ENCODE measurements at regions of chr17 and their contacts with region 1.

Region 1: DNA sequence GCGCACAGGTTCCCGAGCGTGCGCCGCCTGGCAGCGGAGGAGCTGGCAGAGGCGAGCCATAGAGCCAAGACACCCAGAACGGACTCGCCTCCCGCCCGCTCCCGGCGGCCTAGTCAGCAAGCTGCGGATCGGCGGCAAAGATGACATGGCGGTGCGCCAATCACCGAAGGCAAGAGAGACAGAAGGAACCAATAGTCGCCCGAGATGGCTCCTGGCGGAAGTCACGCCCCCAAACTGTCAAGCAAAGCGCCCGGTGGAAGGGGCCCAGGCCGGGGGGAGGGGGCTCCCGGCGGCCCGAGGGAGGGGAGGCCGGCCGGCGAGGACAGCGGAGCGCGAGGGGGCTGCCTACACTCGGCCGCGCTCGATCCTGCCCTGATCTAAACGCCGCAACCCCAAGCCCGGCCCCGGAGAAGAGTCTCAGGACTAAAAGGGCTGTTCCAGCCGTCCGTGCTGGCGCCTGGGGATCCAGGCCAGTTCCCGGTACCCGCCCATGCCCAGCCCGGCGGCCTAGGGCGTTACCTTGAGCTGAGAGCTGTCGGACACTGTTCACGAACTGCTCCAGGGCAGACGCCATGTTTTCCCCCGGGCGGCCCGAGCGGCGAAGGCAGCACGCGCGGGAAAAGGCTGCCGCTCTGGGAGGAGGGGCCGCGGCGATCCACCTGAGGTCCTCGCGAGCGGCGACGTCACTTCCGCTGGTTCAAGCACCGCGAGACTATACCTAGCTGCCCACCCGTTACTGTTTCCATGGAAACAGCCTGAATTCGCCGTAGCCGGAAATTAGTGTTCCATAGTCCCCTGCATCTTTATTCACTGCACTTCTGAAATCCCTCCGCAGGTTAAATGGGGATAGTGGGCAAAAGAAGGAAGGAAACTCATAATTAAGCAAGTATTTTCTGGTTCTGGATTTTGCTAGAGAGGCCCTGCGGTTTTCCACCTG is at the start of gene COPS3:
- DNase-seq: peak; percentile 92 to 99 (median 96)
- ATAC-seq: peak; percentile 87
- H3K4me3 ChIP-seq: peak within 1 kb of the TSS; percentile 98
- H3K4me3 Mint-ChIP-seq: peak within 1 kb of the TSS; percentile 99
- H3K27ac ChIP-seq: peak within 1 kb of the TSS; percentile 96 to 99
- H3K27ac Mint-ChIP-seq: peak within 1 kb of the TSS; percentile 98
- H3K4me1 ChIP-seq: peaks cover 36% of the 10 kb centered on the region
- H3K4me1 Mint-ChIP-seq: peaks cover 46% of the 10 kb centered on the region
- H3K27me3 ChIP-seq: no peaks in the 10 kb centered on the region
- H3K27me3 Mint-ChIP-seq: no peaks in the 10 kb centered on the region
- CTCF ChIP-seq: no peak
- total RNA-seq, gene COPS3: 73.1 to 75.0 TPM

Region 2: DNA sequence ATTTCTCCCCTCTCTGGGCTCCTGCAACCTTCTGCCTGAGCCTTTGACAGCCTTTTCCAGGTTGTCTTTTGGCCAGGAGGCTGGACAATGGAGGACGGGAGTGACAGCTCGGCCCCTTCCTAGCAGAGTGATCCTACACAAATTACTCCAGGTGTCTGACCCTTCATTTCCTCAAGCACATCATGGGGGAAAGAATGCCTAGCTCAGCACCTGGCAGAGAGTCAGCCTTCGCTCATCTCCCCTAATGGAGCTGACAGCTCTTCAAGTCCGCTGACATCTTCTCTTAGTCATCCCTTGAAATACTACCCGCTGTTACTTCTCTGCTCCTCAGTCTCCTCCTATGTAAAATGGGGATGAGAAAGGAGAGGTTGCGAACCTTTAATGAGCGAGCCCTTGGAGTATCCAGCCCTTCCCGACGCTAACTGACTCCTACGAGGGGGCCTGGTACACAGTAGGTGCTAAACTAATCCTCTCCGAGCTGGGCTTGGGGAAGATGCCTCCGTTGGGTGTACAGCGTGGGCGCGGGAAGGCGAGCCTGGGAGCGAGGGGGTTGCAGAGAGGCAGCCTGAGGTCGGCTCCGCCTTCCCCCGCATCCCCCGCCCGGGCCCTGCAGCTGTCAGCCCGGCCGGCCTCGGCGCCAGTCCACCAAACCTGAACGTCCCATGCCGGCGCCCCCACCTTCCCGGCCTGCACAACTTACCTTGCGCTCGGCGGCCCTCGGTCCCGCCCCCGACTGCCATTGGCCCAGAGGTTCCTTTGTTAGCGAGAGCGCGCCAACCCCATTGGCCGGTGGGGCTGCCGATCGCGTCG is 239.1 kb before region 1 on chr17:
- CTCF ChIA-PET with region 1: no interaction called
- POLR2A ChIA-PET with region 1: interaction called, 3 read pairs
- intact Hi-C with region 1: loop called in 1 of 2 experiments (anchors 5 kb)
- DNase-seq: peak; percentile 92 to 98 (median 97)
- ATAC-seq: peak; percentile 98
- H3K4me3 ChIP-seq: peak overlapping the region; percentile 59
- H3K4me3 Mint-ChIP-seq: peak overlapping the region; percentile 81
- H3K27ac ChIP-seq: no peak overlapping the region
- H3K27ac Mint-ChIP-seq: peak overlapping the region; percentile 70
- H3K4me1 ChIP-seq: peaks cover 40% of the 10 kb centered on the region
- H3K4me1 Mint-ChIP-seq: peaks cover 48% of the 10 kb centered on the region
- H3K27me3 ChIP-seq: no peaks in the 10 kb centered on the region
- H3K27me3 Mint-ChIP-seq: no peaks in the 10 kb centered on the region
- CTCF ChIP-seq: no peak

Region 3: GRCh38 chr17:17206124-17206912 is 74.6 kb before region 1 on chr17 and contains the start of gene PLD6:
- CTCF ChIA-PET with region 1: no interaction called
- POLR2A ChIA-PET with region 1: no interaction called
- intact Hi-C with region 1: loop called in 1 of 2 experiments (anchors 2 kb)
- DNase-seq: peak; percentile 85 to 97 (median 90)
- ATAC-seq: peak; percentile 73
- H3K4me3 ChIP-seq: peak within 1 kb of the TSS; percentile 84
- H3K4me3 Mint-ChIP-seq: peak within 1 kb of the TSS; percentile 93
- H3K27ac ChIP-seq: peak within 1 kb of the TSS; percentile 45 to 53
- H3K27ac Mint-ChIP-seq: peak within 1 kb of the TSS; percentile 92
- H3K4me1 ChIP-seq: peaks cover 34% of the 10 kb centered on the region
- H3K4me1 Mint-ChIP-seq: peaks cover 24% of the 10 kb centered on the region
- H3K27me3 ChIP-seq: no peaks in the 10 kb centered on the region
- H3K27me3 Mint-ChIP-seq: no peaks in the 10 kb centered on the region
- CTCF ChIP-seq: no peak
- total RNA-seq, gene PLD6: 7.1 to 7.5 TPM

Region 4: GRCh38 chr17:17237026-17237799 is 43.7 kb before region 1 on chr17 and contains the start of gene FLCN:
- CTCF ChIA-PET with region 1: interaction called, 3 read pairs
- POLR2A ChIA-PET with region 1: interaction called, 14 read pairs
- intact Hi-C with region 1: loop called (anchors 1 to 2 kb)
- DNase-seq: peak; percentile 78 to 95 (median 87)
- ATAC-seq: peak; percentile 91
- H3K4me3 ChIP-seq: peak within 1 kb of the TSS; percentile 99
- H3K4me3 Mint-ChIP-seq: peak within 1 kb of the TSS; percentile 96
- H3K27ac ChIP-seq: peak within 1 kb of the TSS; percentile 85 to 91
- H3K27ac Mint-ChIP-seq: peak within 1 kb of the TSS; percentile 98
- H3K4me1 ChIP-seq: peaks cover 26% of the 10 kb centered on the region
- H3K4me1 Mint-ChIP-seq: peaks cover 33% of the 10 kb centered on the region
- H3K27me3 ChIP-seq: no peaks in the 10 kb centered on the region
- H3K27me3 Mint-ChIP-seq: no peaks in the 10 kb centered on the region
- CTCF ChIP-seq: no peak
- total RNA-seq, gene FLCN: 12.1 to 15.9 TPM

Region 5: DNA sequence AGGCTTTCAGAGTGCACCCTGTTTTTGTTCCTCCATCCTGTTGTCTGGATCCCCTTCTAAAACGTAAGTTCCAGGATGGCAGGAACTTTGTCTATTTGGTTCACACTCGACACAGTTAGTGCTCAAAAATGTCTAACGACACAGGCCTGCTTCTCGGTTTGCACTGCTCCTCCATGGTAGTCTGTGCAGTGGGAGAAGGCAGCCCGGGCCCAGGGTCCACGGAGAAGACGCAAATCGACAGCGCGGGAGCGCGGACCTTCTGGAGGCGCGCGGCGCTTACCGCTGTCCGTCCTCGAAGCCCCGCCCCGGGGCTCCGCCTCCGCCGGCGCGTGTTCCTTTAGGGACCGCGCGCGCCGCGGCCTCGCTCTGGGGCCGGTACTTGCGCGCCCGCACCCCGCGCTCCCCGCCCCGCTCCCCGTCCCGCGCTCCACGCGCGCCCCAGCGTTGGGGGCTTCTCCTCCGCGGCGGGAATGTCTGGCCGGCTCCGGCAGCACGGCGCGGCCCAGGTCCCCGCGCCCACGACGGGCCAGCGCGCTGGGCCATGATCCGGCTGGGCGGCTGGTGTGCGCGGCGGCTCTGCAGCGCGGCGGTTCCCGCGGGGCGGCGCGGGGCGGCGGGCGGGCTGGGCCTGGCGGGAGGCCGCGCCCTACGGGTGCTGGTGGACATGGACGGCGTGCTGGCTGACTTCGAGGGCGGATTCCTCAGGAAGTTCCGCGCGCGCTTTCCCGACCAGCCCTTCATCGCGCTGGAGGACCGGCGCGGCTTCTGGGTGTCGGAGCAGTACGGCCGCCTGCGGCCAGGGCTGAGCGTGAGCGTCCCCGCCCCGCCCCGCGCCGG is 22.3 kb after region 1 on chr17 and contains the start of gene NT5M:
- CTCF ChIA-PET with region 1: no interaction called
- POLR2A ChIA-PET with region 1: interaction called, 11 read pairs
- intact Hi-C with region 1: loop called (anchors 2 kb)
- DNase-seq: peak in 13 of 14 experiments; percentile 29 to 83 (median 59)
- ATAC-seq: peak; percentile 61
- H3K4me3 ChIP-seq: peak within 1 kb of the TSS; percentile 46
- H3K4me3 Mint-ChIP-seq: peak within 1 kb of the TSS; percentile 88
- H3K27ac ChIP-seq: no peak within 1 kb of the TSS
- H3K27ac Mint-ChIP-seq: peak within 1 kb of the TSS; percentile 86
- H3K4me1 ChIP-seq: peaks cover 45% of the 10 kb centered on the region
- H3K4me1 Mint-ChIP-seq: peaks cover 36% of the 10 kb centered on the region
- H3K27me3 ChIP-seq: no peaks in the 10 kb centered on the region
- H3K27me3 Mint-ChIP-seq: no peaks in the 10 kb centered on the region
- CTCF ChIP-seq: no peak
- total RNA-seq, gene NT5M: 1.8 to 2.9 TPM

Region 6: GRCh38 chr17:17476865-17477467 is 196.1 kb after region 1 on chr17 and contains the start of gene MED9:
- CTCF ChIA-PET with region 1: no interaction called
- POLR2A ChIA-PET with region 1: no interaction called
- intact Hi-C with region 1: loop called in 1 of 2 experiments (anchors 5 kb)
- DNase-seq: peak; percentile 92 to 98 (median 94)
- ATAC-seq: peak; percentile 98
- H3K4me3 ChIP-seq: peak within 1 kb of the TSS; percentile 82
- H3K4me3 Mint-ChIP-seq: peak within 1 kb of the TSS; percentile 91
- H3K27ac ChIP-seq: peak within 1 kb of the TSS; percentile 42 to 58
- H3K27ac Mint-ChIP-seq: peak within 1 kb of the TSS; percentile 87
- H3K4me1 ChIP-seq: peaks cover 42% of the 10 kb centered on the region
- H3K4me1 Mint-ChIP-seq: peaks cover 51% of the 10 kb centered on the region
- H3K27me3 ChIP-seq: peaks cover 0 to 2% of the 10 kb centered on the region in 2 experiments
- H3K27me3 Mint-ChIP-seq: peaks cover 6% of the 10 kb centered on the region
- CTCF ChIP-seq: no peak
- total RNA-seq, gene MED9: 27.0 to 27.9 TPM

Region 7: DNA sequence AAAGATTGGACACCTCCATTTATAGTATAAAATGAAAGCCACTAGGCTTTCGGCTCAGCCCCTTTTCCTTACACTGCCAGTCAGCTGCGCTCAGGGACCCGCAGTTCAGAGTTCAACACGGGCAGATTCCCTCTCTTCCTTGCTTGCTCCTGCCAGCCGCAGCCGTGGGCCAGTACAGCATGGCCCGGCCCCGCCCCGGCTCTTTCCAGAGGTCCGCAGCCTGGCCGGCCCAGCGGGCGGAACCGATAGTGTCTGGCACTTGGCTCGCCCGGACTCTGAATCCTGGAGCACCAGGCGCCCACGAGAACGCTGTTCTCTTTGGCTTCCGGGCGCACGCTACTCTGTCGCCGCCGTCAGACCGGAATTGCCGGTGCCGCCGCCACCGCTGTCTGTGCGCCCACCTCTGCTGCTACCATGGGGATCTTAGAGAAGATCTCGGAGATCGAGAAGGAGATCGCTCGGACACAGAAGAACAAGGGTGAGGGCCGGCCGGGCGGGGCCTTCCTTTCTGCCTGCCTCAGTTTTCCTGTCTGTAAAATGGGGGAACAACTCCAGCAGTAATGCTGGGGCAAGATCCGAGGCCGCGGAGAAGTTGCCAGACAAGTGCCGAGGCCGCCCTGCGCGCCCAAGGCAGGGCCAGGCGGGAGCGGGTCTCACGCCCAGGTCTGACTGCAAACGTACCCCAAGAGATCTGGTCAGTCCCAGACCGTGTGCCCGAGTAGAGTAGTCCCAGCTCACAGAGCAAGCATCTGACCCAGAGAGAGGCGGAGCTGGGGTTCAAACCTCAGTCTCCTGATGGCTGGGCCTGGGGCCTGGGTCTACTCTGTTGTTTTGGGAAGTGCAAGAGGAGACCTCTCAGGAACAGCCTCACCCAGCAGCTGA is 807.0 kb after region 1 on chr17 and contains the start of gene DRG2:
- CTCF ChIA-PET with region 1: no interaction called
- POLR2A ChIA-PET with region 1: no interaction called
- intact Hi-C with region 1: loop called in 1 of 2 experiments (anchors 5 kb)
- DNase-seq: peak; percentile 79 to 94 (median 84)
- ATAC-seq: peak; percentile 92
- H3K4me3 ChIP-seq: peak within 1 kb of the TSS; percentile 79
- H3K4me3 Mint-ChIP-seq: peak within 1 kb of the TSS; percentile 100
- H3K27ac ChIP-seq: peak within 1 kb of the TSS; percentile 80
- H3K27ac Mint-ChIP-seq: peak within 1 kb of the TSS; percentile 97
- H3K4me1 ChIP-seq: peaks cover 27% of the 10 kb centered on the region
- H3K4me1 Mint-ChIP-seq: peaks cover 32% of the 10 kb centered on the region
- H3K27me3 ChIP-seq: no peaks in the 10 kb centered on the region
- H3K27me3 Mint-ChIP-seq: no peaks in the 10 kb centered on the region
- CTCF ChIP-seq: no peak
- total RNA-seq, gene DRG2: 38.9 to 40.6 TPM